OCI-LY7 (cell line): ENCODE measurements at regions of chr10 and their contacts with region 1.

Region 1: DNA sequence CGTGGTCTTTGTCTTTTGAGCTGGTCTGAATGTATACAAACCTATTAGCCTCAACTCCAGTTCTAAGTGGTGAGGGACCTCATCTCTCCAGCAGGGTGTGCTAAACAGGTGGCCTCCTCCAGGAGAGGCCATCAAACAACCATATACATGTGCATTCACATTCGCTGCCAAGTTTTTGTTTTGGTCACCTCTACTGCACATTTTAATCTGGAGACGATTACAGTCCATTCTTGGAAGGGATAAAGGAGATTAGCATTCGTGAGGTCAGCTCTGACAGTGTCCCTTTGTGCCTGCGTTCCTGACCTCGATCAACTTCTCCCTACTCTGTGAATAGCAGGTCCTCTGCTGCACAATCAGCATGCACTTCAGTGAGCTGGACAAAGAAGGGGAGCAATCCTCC is 60.8 kb downstream of the RHOBTB1 start:
- DNase-seq: peak; percentile 12
- H3K4me3 ChIP-seq: no peak overlapping the region
- H3K27ac ChIP-seq: no peak overlapping the region
- H3K4me1 ChIP-seq: no peaks in the 10 kb centered on the region
- CTCF ChIP-seq: peak; percentile 60

Region 2: DNA sequence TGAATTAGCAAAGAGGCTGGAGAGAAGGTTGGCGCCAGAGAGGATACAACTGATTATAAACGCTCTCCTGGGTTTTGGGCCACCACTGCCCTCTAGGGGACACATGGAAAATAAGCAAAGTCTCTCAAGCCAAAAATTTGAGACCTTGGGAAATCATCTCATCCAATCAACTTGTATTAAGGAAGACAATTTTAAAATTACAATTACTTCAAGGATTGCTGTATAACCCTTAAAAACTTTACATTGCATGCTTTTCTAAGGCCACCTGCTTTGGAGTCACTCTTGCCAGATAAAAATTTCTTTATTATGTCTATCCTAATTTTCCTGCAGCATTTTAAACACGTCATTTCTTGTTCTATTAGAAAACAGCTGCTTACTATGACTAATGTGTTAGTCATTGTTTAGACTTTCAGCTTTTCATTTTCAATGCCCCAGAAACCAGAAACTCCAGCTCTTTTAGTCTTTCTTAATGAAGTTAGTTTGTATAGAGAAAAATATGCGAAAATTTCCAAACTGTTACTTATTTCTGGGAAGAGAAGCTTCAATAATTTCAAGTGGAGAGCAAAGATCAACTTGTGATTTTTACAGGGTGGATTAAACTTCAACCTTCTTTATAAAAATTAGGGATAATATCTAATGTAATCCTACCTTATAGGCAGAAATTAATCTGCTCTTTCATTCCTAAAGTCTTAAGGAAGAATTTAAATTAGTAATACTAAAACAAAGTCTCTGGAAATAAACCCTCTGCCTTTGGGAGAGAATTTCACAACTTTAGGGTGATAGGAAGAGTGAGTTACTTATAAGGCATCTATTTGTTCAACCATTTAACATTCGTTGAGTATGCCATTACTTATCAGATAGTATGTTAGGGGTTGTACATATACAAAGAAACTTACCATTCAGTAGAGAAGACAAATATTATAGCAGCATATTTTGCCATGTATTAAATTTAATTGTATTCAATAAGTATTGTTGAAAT is 81.4 kb after region 1 on chr10:
- CTCF ChIA-PET with region 1: no interaction called
- POLR2A ChIA-PET with region 1: no interaction called
- intact Hi-C with region 1: loop called (anchors 2 kb)
- DNase-seq: peak; percentile 60
- H3K4me3 ChIP-seq: no peak overlapping the region
- H3K27ac ChIP-seq: no peak overlapping the region
- H3K4me1 ChIP-seq: peaks cover 10% of the 10 kb centered on the region
- CTCF ChIP-seq: peak; percentile 91